Endothelial cell of umbilical vein (primary cell): ENCODE measurements at regions of chr14 and their contacts with region 1.

Region 1: GRCh38 chr14:76876076-76876475 is 49.9 kb downstream of the LRRC74A start:
- DNase-seq: peak; percentile 68
- H3K4me3 ChIP-seq: no peak overlapping the region
- H3K27ac ChIP-seq: no peak overlapping the region
- H3K4me1 ChIP-seq: no peaks in the 10 kb centered on the region
- H3K27me3 ChIP-seq: no peaks in the 10 kb centered on the region
- CTCF ChIP-seq: peak; percentile 92 to 94
- POLR2A ChIP-seq: no peak

Region 2: GRCh38 chr14:76672123-76672522 is 204.0 kb before region 1 on chr14:
- CTCF ChIA-PET with region 1: no interaction called
- POLR2A ChIA-PET with region 1: no interaction called
- dilution Hi-C with region 1: no loop called
- intact Hi-C with region 1: no loop called
- DNase-seq: no peak
- H3K4me3 ChIP-seq: no peak overlapping the region
- H3K27ac ChIP-seq: no peak overlapping the region
- H3K4me1 ChIP-seq: no peaks in the 10 kb centered on the region
- H3K27me3 ChIP-seq: peaks cover 0 to 5% of the 10 kb centered on the region in 2 experiments
- CTCF ChIP-seq: no peak
- POLR2A ChIP-seq: no peak

Region 3: GRCh38 chr14:76887196-76887595 is 11.1 kb after region 1 on chr14:
- CTCF ChIA-PET with region 1: interaction called, 30 read pairs
- POLR2A ChIA-PET with region 1: no interaction called
- dilution Hi-C with region 1: no loop called
- intact Hi-C with region 1: no loop called
- DNase-seq: no peak
- H3K4me3 ChIP-seq: no peak overlapping the region
- H3K27ac ChIP-seq: no peak overlapping the region
- H3K4me1 ChIP-seq: no peaks in the 10 kb centered on the region
- H3K27me3 ChIP-seq: peaks cover 13 to 15% of the 10 kb centered on the region in 2 experiments
- CTCF ChIP-seq: no peak
- POLR2A ChIP-seq: no peak

Region 4: GRCh38 chr14:76918751-76919543 is 42.9 kb after region 1 on chr14:
- CTCF ChIA-PET with region 1: interaction called, 43 read pairs
- POLR2A ChIA-PET with region 1: no interaction called
- dilution Hi-C with region 1: no loop called
- intact Hi-C with region 1: no loop called
- DNase-seq: peak; percentile 98
- H3K4me3 ChIP-seq: no peak overlapping the region
- H3K27ac ChIP-seq: peak overlapping the region; percentile 86
- H3K4me1 ChIP-seq: peaks cover 32% of the 10 kb centered on the region
- H3K27me3 ChIP-seq: no peaks in the 10 kb centered on the region
- CTCF ChIP-seq: peak in 1 of 2 donors; percentile 24
- POLR2A ChIP-seq: no peak

Region 5: DNA sequence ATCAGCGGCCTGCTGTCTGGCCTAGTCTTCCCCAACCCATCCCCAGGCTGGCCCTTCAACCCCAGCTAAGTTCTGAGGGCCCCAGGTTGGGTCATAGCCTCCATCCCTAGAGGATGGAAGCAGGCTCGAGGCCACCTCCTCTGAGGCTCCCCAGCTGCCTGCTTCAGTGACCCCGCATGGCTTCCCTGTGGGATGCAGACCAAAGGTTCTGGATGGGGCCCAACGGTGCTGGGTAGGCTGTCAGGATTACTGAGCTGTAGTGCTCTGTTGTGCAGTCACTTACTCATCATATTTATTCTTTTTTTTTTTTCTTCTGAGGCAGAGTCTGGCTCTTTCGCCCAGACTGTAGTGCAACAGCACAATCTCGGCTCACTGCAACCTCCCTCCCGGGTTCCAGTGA is 60.4 kb after region 1 on chr14:
- CTCF ChIA-PET with region 1: no interaction called
- POLR2A ChIA-PET with region 1: no interaction called
- dilution Hi-C with region 1: no loop called
- intact Hi-C with region 1: no loop called
- DNase-seq: no peak
- H3K4me3 ChIP-seq: no peak overlapping the region
- H3K27ac ChIP-seq: no peak overlapping the region
- H3K4me1 ChIP-seq: no peaks in the 10 kb centered on the region
- H3K27me3 ChIP-seq: no peaks in the 10 kb centered on the region
- CTCF ChIP-seq: no peak
- POLR2A ChIP-seq: no peak

Region 6: GRCh38 chr14:77053046-77053841 is 177.2 kb after region 1 on chr14:
- CTCF ChIA-PET with region 1: interaction called, 46 read pairs
- POLR2A ChIA-PET with region 1: no interaction called
- dilution Hi-C with region 1: no loop called
- intact Hi-C with region 1: loop called (anchors 1 kb)
- DNase-seq: peak; percentile 81
- H3K4me3 ChIP-seq: no peak overlapping the region
- H3K27ac ChIP-seq: peak overlapping the region; percentile 6
- H3K4me1 ChIP-seq: peaks cover 11% of the 10 kb centered on the region
- H3K27me3 ChIP-seq: no peaks in the 10 kb centered on the region
- CTCF ChIP-seq: peak; percentile 95 to 96
- POLR2A ChIP-seq: no peak

Region 7: DNA sequence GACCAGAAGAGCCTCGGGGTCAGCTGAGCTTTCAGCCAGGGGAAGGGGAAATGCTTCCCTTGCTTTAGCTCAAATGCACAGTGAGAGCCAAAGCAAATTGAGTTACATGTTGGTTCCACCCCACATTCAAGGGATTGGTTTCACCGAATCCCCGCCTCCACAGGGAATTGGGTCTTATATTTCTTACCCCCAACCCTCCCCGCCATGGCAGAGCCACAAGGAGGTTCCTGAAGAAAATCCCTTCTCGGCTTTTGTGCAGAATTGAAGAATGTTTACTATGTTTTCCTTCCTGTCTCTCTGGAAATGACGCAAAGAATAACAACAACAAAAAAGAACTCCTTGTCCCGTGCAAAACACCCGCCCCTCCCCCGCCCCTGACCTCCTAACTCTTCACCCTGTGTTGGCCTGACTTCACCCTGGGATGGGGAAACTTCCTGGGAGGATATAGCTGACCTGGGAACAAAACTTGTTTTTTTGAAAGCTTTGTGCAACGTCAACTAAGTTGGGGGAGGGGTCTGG is 200.1 kb after region 1 on chr14:
- CTCF ChIA-PET with region 1: interaction called, 450 read pairs
- POLR2A ChIA-PET with region 1: no interaction called
- dilution Hi-C with region 1: loop called (anchors 25 kb)
- intact Hi-C with region 1: no loop called
- DNase-seq: peak; percentile 89
- H3K4me3 ChIP-seq: no peak overlapping the region
- H3K27ac ChIP-seq: peak overlapping the region; percentile 86
- H3K4me1 ChIP-seq: peaks cover 14% of the 10 kb centered on the region
- H3K27me3 ChIP-seq: no peaks in the 10 kb centered on the region
- CTCF ChIP-seq: no peak
- POLR2A ChIP-seq: no peak

Region 8: GRCh38 chr14:77124345-77125280 is 248.5 kb after region 1 on chr14:
- CTCF ChIA-PET with region 1: interaction called, 49 read pairs
- POLR2A ChIA-PET with region 1: no interaction called
- dilution Hi-C with region 1: no loop called
- intact Hi-C with region 1: loop called (anchors 1 kb)
- DNase-seq: peak; percentile 53
- H3K4me3 ChIP-seq: peak overlapping the region; percentile 4 to 42 (median 36)
- H3K27ac ChIP-seq: no peak overlapping the region
- H3K4me1 ChIP-seq: peaks cover 6% of the 10 kb centered on the region
- H3K27me3 ChIP-seq: peaks cover 12 to 16% of the 10 kb centered on the region in 2 experiments
- CTCF ChIP-seq: peak; percentile 43 to 81
- POLR2A ChIP-seq: no peak

Region 9: DNA sequence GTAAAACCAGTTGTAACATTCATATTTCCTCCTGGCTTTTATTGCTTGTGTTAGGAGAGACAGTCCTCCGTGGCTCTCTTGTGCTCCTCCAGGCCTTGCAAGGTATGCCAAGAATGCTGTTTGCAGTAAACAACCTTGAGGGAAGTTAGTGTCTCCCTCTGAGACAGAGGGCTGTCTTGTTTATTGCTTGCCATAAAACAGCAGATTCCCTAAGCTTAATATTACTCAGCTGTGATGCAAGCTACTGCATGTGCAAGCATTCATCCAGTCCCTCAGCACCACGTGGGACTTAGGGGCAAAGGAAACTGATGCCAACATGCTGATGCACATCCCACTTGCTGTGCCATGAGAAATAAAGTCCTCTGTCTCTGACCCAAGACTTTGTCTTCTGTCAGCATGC is 438.0 kb after region 1 on chr14:
- CTCF ChIA-PET with region 1: interaction called, 62 read pairs
- POLR2A ChIA-PET with region 1: interaction called, 6 read pairs
- dilution Hi-C with region 1: no loop called
- intact Hi-C with region 1: no loop called
- DNase-seq: no peak
- H3K4me3 ChIP-seq: no peak overlapping the region
- H3K27ac ChIP-seq: no peak overlapping the region
- H3K4me1 ChIP-seq: no peaks in the 10 kb centered on the region
- H3K27me3 ChIP-seq: no peaks in the 10 kb centered on the region
- CTCF ChIP-seq: no peak
- POLR2A ChIP-seq: no peak

Region 10: GRCh38 chr14:77390188-77390587 is 514.1 kb after region 1 on chr14:
- CTCF ChIA-PET with region 1: no interaction called
- POLR2A ChIA-PET with region 1: no interaction called
- dilution Hi-C with region 1: no loop called
- intact Hi-C with region 1: no loop called
- DNase-seq: no peak
- H3K4me3 ChIP-seq: no peak overlapping the region
- H3K27ac ChIP-seq: no peak overlapping the region
- H3K4me1 ChIP-seq: no peaks in the 10 kb centered on the region
- H3K27me3 ChIP-seq: no peaks in the 10 kb centered on the region
- CTCF ChIP-seq: no peak
- POLR2A ChIP-seq: no peak